ENCODE measurements at regions of chr16 and their contacts with region 1.

Region 1: GRCh38 chr16:71610936-71611871 is 14.8 kb upstream of the MARVELD3 start:
- H3K4me3 Mint-ChIP-seq: no peak overlapping the region
- H3K27ac Mint-ChIP-seq: no peak overlapping the region
- H3K4me1 Mint-ChIP-seq: no peaks in the 10 kb centered on the region
- H3K27me3 Mint-ChIP-seq: peaks cover 22% of the 10 kb centered on the region

Region 2: DNA sequence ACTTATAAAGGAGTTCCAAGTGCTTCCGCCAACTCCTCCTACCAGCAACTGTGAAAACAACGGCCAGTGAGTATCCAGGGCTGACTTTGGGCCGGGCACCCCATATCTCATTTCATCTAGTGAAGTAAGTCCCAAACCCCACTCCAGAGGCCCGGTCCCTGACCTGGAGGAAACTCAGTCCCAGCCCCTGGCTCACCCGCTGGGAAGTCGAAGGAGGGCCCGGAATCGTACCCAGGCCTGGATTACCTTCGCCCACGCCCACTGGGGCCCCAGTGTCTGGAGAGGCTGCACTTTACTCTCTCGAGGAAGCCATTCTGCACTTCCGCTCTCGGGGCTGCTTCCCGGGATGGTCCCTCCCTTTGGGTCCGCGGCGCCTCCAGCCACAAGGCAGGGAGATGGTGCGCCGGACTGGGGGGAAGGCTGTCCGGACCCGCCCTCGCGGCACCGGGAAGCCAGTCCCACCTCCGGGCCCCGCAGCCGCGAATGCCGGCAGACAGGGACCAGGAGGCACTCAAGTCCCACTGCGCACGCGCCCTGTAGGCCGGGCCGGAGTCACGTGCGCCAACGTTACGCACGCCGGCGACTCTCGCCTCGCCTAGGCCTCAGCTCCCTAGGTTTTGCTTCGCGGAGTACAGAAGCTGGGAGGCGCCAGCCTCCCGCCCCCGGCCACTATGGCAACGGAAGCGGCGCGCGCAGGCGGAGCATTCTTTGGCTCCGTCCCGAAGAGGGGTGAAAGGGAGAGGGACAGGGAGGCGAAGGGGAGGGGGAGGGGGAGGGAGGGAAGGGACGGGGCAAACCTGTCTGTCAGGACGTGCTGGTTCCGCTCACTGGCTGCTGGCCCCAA is 322.1 kb before region 1 on chr16 and contains the start of gene CMTR2:
- intact Hi-C with region 1: no loop called
- H3K4me3 Mint-ChIP-seq: peak within 1 kb of the TSS; percentile 87
- H3K27ac Mint-ChIP-seq: peak within 1 kb of the TSS; percentile 90
- H3K4me1 Mint-ChIP-seq: peaks cover 21% of the 10 kb centered on the region
- H3K27me3 Mint-ChIP-seq: peaks cover 17% of the 10 kb centered on the region

Region 3: GRCh38 chr16:71412270-71413160 is 198.7 kb before region 1 on chr16:
- intact Hi-C with region 1: loop called (anchors 1 kb)
- H3K4me3 Mint-ChIP-seq: no peak overlapping the region
- H3K27ac Mint-ChIP-seq: no peak overlapping the region
- H3K4me1 Mint-ChIP-seq: no peaks in the 10 kb centered on the region
- H3K27me3 Mint-ChIP-seq: peaks cover 36% of the 10 kb centered on the region

Region 4: DNA sequence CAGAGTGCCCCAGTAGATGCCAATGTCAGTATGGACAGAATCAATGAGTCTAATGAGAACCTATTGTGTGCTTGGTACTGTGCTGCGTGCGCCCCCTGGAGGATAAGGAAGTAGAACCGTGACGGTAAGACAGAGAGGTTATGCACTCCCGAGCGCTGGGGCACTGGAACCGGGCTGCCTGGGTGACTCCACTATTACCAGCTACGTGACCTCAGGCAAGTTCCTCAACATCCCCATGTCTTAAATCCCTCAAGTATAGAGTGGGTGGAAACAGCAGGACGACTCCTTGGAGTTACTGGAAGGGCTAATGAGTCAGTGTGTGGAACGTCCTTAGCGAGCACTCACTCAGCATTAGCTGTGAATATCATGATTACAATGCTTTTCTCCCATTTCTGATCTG is 68.8 kb before region 1 on chr16:
- intact Hi-C with region 1: loop called (anchors 10 kb)
- H3K4me3 Mint-ChIP-seq: no peak overlapping the region
- H3K27ac Mint-ChIP-seq: no peak overlapping the region
- H3K4me1 Mint-ChIP-seq: peaks cover 7% of the 10 kb centered on the region
- H3K27me3 Mint-ChIP-seq: peaks cover 11% of the 10 kb centered on the region

Region 5: GRCh38 chr16:71637398-71637797 is 26.2 kb after region 1 on chr16:
- intact Hi-C with region 1: no loop called
- H3K4me3 Mint-ChIP-seq: no peak overlapping the region
- H3K27ac Mint-ChIP-seq: no peak overlapping the region
- H3K4me1 Mint-ChIP-seq: peaks cover 8% of the 10 kb centered on the region
- H3K27me3 Mint-ChIP-seq: peaks cover 2% of the 10 kb centered on the region

Region 6: GRCh38 chr16:71767060-71767900 is 156.1 kb after region 1 on chr16:
- intact Hi-C with region 1: no loop called
- H3K4me3 Mint-ChIP-seq: no peak overlapping the region
- H3K27ac Mint-ChIP-seq: no peak overlapping the region
- H3K4me1 Mint-ChIP-seq: no peaks in the 10 kb centered on the region
- H3K27me3 Mint-ChIP-seq: no peaks in the 10 kb centered on the region

Region 7: GRCh38 chr16:72025759-72026114 is 414.5 kb after region 1 on chr16:
- intact Hi-C with region 1: no loop called
- H3K4me3 Mint-ChIP-seq: no peak overlapping the region
- H3K27ac Mint-ChIP-seq: no peak overlapping the region
- H3K4me1 Mint-ChIP-seq: peaks cover 11% of the 10 kb centered on the region
- H3K27me3 Mint-ChIP-seq: no peaks in the 10 kb centered on the region